Motor neuron (in vitro differentiated cells): ENCODE measurements at regions of chr17 and their contacts with region 1.

Region 1: GRCh38 chr17:74601944-74602572 is 10.0 kb upstream of the CD300LD start:
- ATAC-seq: peak; percentile 5 to 67 (median 42)
- H3K4me3 ChIP-seq: no peak overlapping the region
- H3K27ac ChIP-seq: no peak overlapping the region
- H3K4me1 ChIP-seq: peaks cover 2 to 14% of the 10 kb centered on the region in 2 donors

Region 2: GRCh38 chr17:73984941-73985340 is 617.1 kb before region 1 on chr17:
- in situ Hi-C with region 1: no loop called
- ATAC-seq: no peak
- H3K4me3 ChIP-seq: no peak overlapping the region
- H3K27ac ChIP-seq: no peak overlapping the region
- H3K4me1 ChIP-seq: peaks cover 0 to 4% of the 10 kb centered on the region in 2 donors

Region 3: DNA sequence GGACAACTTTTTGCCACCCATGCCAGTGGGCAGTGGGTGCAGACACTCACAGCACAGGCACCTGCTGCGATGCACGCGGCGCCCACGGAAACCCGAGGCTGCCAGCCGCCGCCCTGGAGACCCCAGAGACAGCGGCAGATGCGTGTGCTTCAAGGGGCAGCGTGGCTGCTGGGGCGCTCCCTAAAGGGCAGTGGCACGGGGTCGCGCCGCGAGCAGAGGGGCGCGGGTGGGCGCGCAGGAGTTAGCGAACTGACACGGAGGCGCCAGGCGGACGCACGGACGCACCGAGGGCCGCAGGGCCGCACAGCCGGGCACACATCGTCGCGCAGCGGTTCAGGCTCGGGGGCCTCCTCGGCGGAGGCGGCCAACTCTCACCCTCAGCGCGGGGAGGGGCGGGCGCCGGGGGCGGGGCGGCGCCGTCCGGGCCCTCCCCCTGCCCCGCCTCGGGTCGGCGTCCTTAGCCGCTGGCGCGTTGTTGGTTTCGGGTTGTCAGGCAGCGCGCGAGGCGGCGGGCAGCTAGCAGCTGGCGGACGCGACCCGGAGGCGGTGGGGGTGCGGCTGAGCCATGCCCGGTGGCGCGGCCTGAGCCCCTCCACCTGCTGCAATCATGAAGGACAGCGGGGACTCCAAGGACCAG is 276.2 kb before region 1 on chr17 and contains the start of gene KIF19:
- in situ Hi-C with region 1: no loop called
- ATAC-seq: peak; percentile 77 to 95 (median 81)
- H3K4me3 ChIP-seq: peak within 1 kb of the TSS in 4 of 5 donors; percentile 9 to 17 (median 12)
- H3K27ac ChIP-seq: no peak within 1 kb of the TSS
- H3K4me1 ChIP-seq: peaks cover 5 to 9% of the 10 kb centered on the region in 2 donors
- total RNA-seq, gene KIF19: 0.11 to 3.3 (median 1.2) TPM in 6 of 8 experiments, not detected in the others

Region 4: GRCh38 chr17:74712756-74713155 is 110.7 kb after region 1 on chr17 and contains the start of gene CD300LF:
- in situ Hi-C with region 1: loop called in 1 of 9 experiments (anchors 25 kb)
- ATAC-seq: no peak
- H3K4me3 ChIP-seq: no peak within 1 kb of the TSS
- H3K27ac ChIP-seq: no peak within 1 kb of the TSS
- H3K4me1 ChIP-seq: no peaks in the 10 kb centered on the region
- total RNA-seq, gene CD300LF: 0.24 TPM in 1 of 8 experiments, not detected in the others

Region 5: GRCh38 chr17:74780443-74781238 is 178.6 kb after region 1 on chr17:
- in situ Hi-C with region 1: no loop called
- ATAC-seq: peak in 2 of 8 experiments; percentile 2 to 5
- H3K4me3 ChIP-seq: no peak overlapping the region
- H3K27ac ChIP-seq: no peak overlapping the region
- H3K4me1 ChIP-seq: peaks cover 13 to 17% of the 10 kb centered on the region in 2 donors